A673 (cell line): ENCODE measurements at regions of chr20 and their contacts with region 1.

Region 1: GRCh38 chr20:43187476-43188233 is 2.1 kb downstream of the PTPRT start:
- DNase-seq: peak; percentile 72
- H3K4me3 ChIP-seq: no peak overlapping the region
- H3K27ac ChIP-seq: no peak overlapping the region
- H3K4me1 ChIP-seq: no peaks in the 10 kb centered on the region
- H3K27me3 ChIP-seq: peaks cover 85% of the 10 kb centered on the region
- CTCF ChIP-seq: peak; percentile 97

Region 2: DNA sequence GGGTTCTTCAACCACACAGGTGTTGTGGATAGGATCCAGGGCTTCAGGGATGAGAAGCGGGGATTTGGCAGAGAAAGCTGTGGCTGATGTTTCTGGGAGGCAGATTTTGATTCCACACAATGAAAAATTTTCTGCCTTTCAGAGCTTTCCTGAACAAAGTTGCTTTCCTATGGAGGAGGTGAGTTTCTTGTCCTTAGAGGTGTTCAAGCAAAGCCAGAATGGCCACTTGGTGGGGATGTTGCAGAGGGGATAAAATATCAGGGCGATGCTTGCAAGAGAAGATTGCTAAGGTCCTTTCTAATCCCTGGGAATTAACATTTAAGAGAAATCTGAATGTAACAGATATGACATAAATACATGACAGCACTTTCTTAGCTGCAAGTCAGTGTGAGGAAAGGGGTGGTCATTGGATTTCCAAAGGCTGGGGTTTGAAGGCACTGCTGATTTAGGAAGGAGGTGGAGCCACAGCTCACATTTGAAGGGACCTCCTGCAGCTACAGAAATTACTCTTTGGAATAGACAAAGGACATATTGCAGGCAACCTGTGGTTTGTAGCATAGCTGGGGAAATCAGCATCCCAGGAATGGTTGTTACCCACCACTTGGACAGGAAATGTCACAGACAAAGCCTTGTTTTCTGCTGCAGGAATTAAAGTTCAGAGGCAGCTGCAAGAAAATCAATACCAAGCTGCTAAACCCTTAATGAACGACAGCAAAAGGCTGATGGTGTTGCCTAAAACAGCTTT is 1298.4 kb before region 1 on chr20:
- CTCF ChIA-PET with region 1: no interaction called
- POLR2A ChIA-PET with region 1: no interaction called
- intact Hi-C with region 1: loop called (anchors 5 kb)
- DNase-seq: peak; percentile 57
- H3K4me3 ChIP-seq: no peak overlapping the region
- H3K27ac ChIP-seq: no peak overlapping the region
- H3K4me1 ChIP-seq: no peaks in the 10 kb centered on the region
- H3K27me3 ChIP-seq: peaks cover 6% of the 10 kb centered on the region
- CTCF ChIP-seq: peak; percentile 28; the same call in 1 of the 2 replicates

Region 3: GRCh38 chr20:41955999-41956705 is 1231.5 kb before region 1 on chr20:
- CTCF ChIA-PET with region 1: no interaction called
- POLR2A ChIA-PET with region 1: no interaction called
- intact Hi-C with region 1: loop called (anchors 2 kb)
- DNase-seq: peak; percentile 46
- H3K4me3 ChIP-seq: no peak overlapping the region
- H3K27ac ChIP-seq: no peak overlapping the region
- H3K4me1 ChIP-seq: no peaks in the 10 kb centered on the region
- H3K27me3 ChIP-seq: peaks cover 3% of the 10 kb centered on the region
- CTCF ChIP-seq: peak; percentile 69

Region 4: GRCh38 chr20:43389892-43390626 is 202.4 kb after region 1 on chr20:
- CTCF ChIA-PET with region 1: no interaction called
- POLR2A ChIA-PET with region 1: no interaction called
- intact Hi-C with region 1: loop called (anchors 5 kb)
- DNase-seq: peak; percentile 23
- H3K4me3 ChIP-seq: no peak overlapping the region
- H3K27ac ChIP-seq: no peak overlapping the region
- H3K4me1 ChIP-seq: peaks cover 25% of the 10 kb centered on the region
- H3K27me3 ChIP-seq: no peaks in the 10 kb centered on the region
- CTCF ChIP-seq: peak; percentile 82

Region 5: GRCh38 chr20:43408848-43409576 is 221.4 kb after region 1 on chr20:
- CTCF ChIA-PET with region 1: no interaction called
- POLR2A ChIA-PET with region 1: no interaction called
- intact Hi-C with region 1: loop called (anchors 5 kb)
- DNase-seq: peak; percentile 67
- H3K4me3 ChIP-seq: no peak overlapping the region
- H3K27ac ChIP-seq: no peak overlapping the region
- H3K4me1 ChIP-seq: no peaks in the 10 kb centered on the region
- H3K27me3 ChIP-seq: peaks cover 19% of the 10 kb centered on the region
- CTCF ChIP-seq: peak; percentile 83